ENCODE measurements at regions of chr19 and their contacts with region 1.

Region 1: GRCh38 chr19:1113033-1113985 is 9.5 kb downstream of the GPX4 start:
- DNase-seq: peak; percentile 71
- H3K4me3 ChIP-seq: no peak overlapping the region
- H3K27ac ChIP-seq: no peak overlapping the region
- H3K4me1 ChIP-seq: peaks cover 6% of the 10 kb centered on the region
- H3K27me3 ChIP-seq: no peaks in the 10 kb centered on the region
- CTCF ChIP-seq: peak; percentile 30 to 74

Region 2: GRCh38 chr19:900302-901111 is 212.8 kb before region 1 on chr19:
- CTCF ChIA-PET with region 1: no interaction called
- dilution Hi-C with region 1: no loop called
- in situ Hi-C with region 1: no loop called
- intact Hi-C with region 1: no loop called
- DNase-seq: no peak
- H3K4me3 ChIP-seq: no peak overlapping the region
- H3K27ac ChIP-seq: no peak overlapping the region
- H3K4me1 ChIP-seq: no peaks in the 10 kb centered on the region
- H3K27me3 ChIP-seq: no peaks in the 10 kb centered on the region
- CTCF ChIP-seq: no peak

Region 3: DNA sequence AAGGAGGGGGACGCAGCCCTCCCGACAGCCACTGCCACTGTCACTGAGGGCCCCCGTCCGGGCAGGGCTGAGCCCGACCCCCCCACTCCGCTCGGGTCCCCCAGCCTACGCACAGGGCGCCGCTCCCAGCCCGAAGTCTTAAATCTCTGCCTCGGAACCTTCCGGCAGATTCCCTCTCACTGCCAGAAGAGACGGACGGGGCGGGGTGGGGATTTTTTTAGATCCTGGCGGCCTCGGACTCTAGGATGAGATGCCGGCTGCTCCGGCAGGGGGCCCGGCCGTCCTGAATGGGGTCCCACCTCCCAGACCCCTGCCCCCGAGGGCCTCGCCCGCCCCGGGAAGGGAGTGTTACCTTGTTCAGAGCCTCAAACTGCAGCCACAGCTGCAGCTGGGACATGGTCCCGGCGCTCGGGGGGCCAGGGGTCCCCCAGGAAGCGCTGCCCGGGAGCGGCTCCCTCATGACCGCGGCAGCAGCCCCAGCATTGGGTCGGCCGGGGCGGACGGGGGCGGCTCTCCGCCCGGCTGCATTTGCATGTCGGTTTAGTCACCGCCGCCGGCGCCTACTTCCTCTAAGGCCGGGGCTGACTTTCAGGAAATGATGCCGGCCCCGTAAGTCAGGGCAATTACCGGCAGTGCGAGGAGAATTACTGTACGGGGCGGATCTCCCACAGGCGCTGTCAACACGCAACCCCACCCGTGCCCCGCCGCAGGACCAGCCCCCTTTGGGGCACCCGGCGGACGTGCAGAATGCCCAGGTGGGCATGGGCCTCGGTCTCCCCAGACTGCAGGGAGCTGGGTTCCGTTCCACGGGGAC is 18.6 kb after region 1 on chr19:
- CTCF ChIA-PET with region 1: interaction called, 28 read pairs
- dilution Hi-C with region 1: no loop called
- in situ Hi-C with region 1: no loop called
- intact Hi-C with region 1: no loop called
- DNase-seq: peak; percentile 83
- H3K4me3 ChIP-seq: peak overlapping the region; percentile 58 to 74 (median 58)
- H3K27ac ChIP-seq: peak overlapping the region; percentile 70
- H3K4me1 ChIP-seq: peaks cover 45% of the 10 kb centered on the region
- H3K27me3 ChIP-seq: no peaks in the 10 kb centered on the region
- CTCF ChIP-seq: no peak

Region 4: GRCh38 chr19:1189419-1189818 is 76.1 kb after region 1 on chr19:
- CTCF ChIA-PET with region 1: no interaction called
- dilution Hi-C with region 1: no loop called
- in situ Hi-C with region 1: no loop called
- intact Hi-C with region 1: loop called (anchors 5 kb)
- DNase-seq: peak; percentile 55
- H3K4me3 ChIP-seq: no peak overlapping the region
- H3K27ac ChIP-seq: no peak overlapping the region
- H3K4me1 ChIP-seq: no peaks in the 10 kb centered on the region
- H3K27me3 ChIP-seq: no peaks in the 10 kb centered on the region
- CTCF ChIP-seq: no peak

Measured in mammary epithelial cell (primary cell).